ENCODE measurements at regions of chr10 and their contacts with region 1.

Region 1: DNA sequence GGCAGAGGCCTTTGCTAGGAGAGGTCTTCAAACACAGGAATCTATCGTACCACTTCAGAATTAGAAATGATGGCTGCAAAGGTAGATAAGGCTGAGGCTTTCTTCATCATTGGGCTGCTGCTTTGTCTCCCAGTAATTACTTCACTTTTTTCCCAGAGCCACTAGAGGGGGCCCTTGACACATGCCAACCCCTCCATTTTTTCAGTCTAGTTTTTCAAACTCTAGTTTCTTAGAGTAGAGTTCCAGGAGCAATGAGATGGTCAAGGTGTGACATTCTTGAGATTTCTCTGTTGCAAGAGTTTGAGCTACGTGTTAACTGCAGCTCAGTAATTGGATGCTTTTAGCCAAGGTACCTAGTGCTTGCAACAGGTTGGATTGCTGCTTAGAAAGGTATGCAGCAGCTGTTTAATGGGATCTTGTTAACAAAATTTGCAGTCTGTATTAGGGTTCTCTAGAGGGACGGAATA is 33.8 kb upstream of the RBM20 start:
- DNase-seq: peak; percentile 6
- H3K4me3 ChIP-seq: no peak overlapping the region
- H3K27ac ChIP-seq: no peak overlapping the region
- H3K27me3 ChIP-seq: peaks cover 11% of the 10 kb centered on the region
- CTCF ChIP-seq: peak; percentile 96

Region 2: GRCh38 chr10:110671788-110672579 is 61.6 kb after region 1 on chr10:
- CTCF ChIA-PET with region 1: interaction called, 12 read pairs
- POLR2A ChIA-PET with region 1: no interaction called
- DNase-seq: no peak
- H3K4me3 ChIP-seq: peak overlapping the region; percentile 67
- H3K27ac ChIP-seq: no peak overlapping the region
- H3K27me3 ChIP-seq: peaks cover 12% of the 10 kb centered on the region
- CTCF ChIP-seq: peak; percentile 98

Region 3: GRCh38 chr10:110684800-110685446 is 74.6 kb after region 1 on chr10:
- CTCF ChIA-PET with region 1: interaction called, 10 read pairs
- POLR2A ChIA-PET with region 1: no interaction called
- DNase-seq: peak; percentile 26
- H3K4me3 ChIP-seq: peak overlapping the region; percentile 25
- H3K27ac ChIP-seq: peak overlapping the region; percentile 52
- H3K27me3 ChIP-seq: no peaks in the 10 kb centered on the region
- CTCF ChIP-seq: no peak

Region 4: DNA sequence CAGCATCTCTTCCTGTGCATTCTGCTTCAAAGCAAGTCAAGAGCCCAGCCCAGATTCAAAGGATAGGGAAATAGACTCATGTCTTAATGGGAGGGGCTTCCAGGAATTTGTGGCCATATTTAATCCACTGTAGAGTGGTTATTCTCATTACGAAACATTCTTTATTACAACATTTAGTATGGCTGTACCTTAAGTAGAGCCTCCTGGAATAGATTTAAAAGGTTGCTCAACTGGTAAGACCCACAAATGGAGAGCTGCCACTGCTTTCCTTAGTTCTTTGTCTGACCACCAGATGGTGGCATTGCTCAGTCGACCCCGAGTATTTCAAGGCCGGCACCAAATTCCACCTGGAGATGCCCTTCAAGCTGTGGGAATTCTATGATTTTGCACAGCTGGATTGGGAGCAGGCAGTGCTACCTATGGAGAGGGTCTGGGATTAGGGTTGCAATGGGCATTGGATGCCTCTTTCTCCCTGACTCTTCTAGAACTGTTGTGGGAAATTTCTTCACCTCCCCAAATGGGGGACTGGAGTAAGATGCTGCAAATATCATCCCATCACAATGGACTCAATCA is 136.0 kb after region 1 on chr10:
- CTCF ChIA-PET with region 1: interaction called, 15 read pairs
- POLR2A ChIA-PET with region 1: no interaction called
- DNase-seq: peak; percentile 39
- H3K4me3 ChIP-seq: no peak overlapping the region
- H3K27ac ChIP-seq: no peak overlapping the region
- H3K27me3 ChIP-seq: peaks cover 12% of the 10 kb centered on the region
- CTCF ChIP-seq: peak; percentile 83

Region 5: GRCh38 chr10:111076191-111076681 is 465.9 kb after region 1 on chr10:
- CTCF ChIA-PET with region 1: interaction called, 10 read pairs
- POLR2A ChIA-PET with region 1: no interaction called
- DNase-seq: no peak
- H3K4me3 ChIP-seq: peak overlapping the region; percentile 43
- H3K27ac ChIP-seq: no peak overlapping the region
- H3K27me3 ChIP-seq: peaks cover 65% of the 10 kb centered on the region
- CTCF ChIP-seq: peak; percentile 65